Dorsolateral prefrontal cortex (tissue), 120 donors: ENCODE measurements at regions of chr17 and their contacts with region 1.

Region 1: GRCh38 chr17:50949989-50950881 is 84.1 kb upstream of the TOB1 start:
- DNase-seq: peak; percentile 67 to 86 (median 80)
- H3K4me3 ChIP-seq: peak overlapping the region in 19 of 59 donors; percentile 0 to 49 (median 15)
- H3K27ac ChIP-seq: peak overlapping the region; percentile 21 to 95 (median 81)
- H3K27me3 ChIP-seq: no peaks in the 10 kb centered on the region
- CTCF ChIP-seq: peak; percentile 61 to 98 (median 88)

Region 2: DNA sequence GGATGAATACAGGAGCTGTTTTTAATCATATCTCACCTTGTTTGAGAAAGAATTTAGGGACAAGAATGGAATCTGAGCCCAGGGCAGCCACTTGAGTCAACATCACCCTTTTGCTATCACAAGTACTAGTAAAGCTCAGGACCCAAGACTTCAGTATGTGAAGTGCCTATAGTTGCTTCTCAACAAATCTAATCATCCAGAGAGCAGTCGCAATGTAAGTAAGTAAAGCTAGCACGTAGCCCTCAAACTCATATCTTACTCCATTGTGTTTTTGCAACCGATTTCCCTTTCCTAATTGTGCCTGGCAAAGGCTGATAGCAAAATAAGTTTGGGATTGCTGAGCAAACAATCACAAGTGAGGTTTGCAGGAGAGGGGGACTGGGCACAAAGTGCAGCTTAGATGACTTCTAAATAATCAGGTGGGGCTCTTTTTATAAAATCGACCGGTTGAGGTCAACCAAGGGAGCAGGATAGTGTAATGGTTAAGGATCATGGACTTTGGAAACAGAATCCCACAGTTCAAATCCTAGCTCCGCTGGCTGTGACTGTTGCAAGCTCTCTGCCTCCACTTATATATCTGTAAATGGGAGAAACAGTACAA is 97.1 kb before region 1 on chr17:
- intact Hi-C with region 1: loop called in 1 of 2 experiments (anchors 2 kb)
- DNase-seq: no peak
- H3K4me3 ChIP-seq: no peak overlapping the region
- H3K27ac ChIP-seq: peak overlapping the region in 23 of 59 donors; percentile 7 to 94 (median 63)
- H3K27me3 ChIP-seq: no peaks in the 10 kb centered on the region
- CTCF ChIP-seq: no peak

Region 3: GRCh38 chr17:50883850-50884438 is 66.3 kb before region 1 on chr17:
- intact Hi-C with region 1: no loop called
- DNase-seq: no peak
- H3K4me3 ChIP-seq: no peak overlapping the region
- H3K27ac ChIP-seq: peak overlapping the region in 1 of 59 donors; percentile 16
- H3K27me3 ChIP-seq: no peaks in the 10 kb centered on the region
- CTCF ChIP-seq: no peak